ENCODE measurements at regions of chr2 and their contacts with region 1.

Region 1: GRCh38 chr2:105834931-105835330 is 90.2 kb downstream of the NCK2 start:
- DNase-seq: peak; percentile 61
- ATAC-seq: peak; percentile 92
- H3K4me3 ChIP-seq: no peak overlapping the region
- H3K27ac ChIP-seq: no peak overlapping the region
- H3K4me1 ChIP-seq: peaks cover 8% of the 10 kb centered on the region; the same call in 1 of the 2 replicates
- H3K27me3 ChIP-seq: no peaks in the 10 kb centered on the region
- CTCF ChIP-seq: no peak
- EP300 ChIP-seq: peak; percentile 86 to 91
- POLR2A ChIP-seq: no peak
- RAD21 ChIP-seq: no peak

Region 2: GRCh38 chr2:105812180-105813044 is 22.5 kb before region 1 on chr2:
- CTCF ChIA-PET with region 1: no interaction called
- POLR2A ChIA-PET with region 1: interaction called, 3 read pairs
- RAD21 ChIA-PET with region 1: no interaction called
- SMC1A ChIA-PET with region 1: no interaction called
- in situ Hi-C with region 1: no loop called
- intact Hi-C with region 1: loop called (anchors 2 kb)
- DNase-seq: no peak
- ATAC-seq: peak; percentile 97
- H3K4me3 ChIP-seq: no peak overlapping the region
- H3K27ac ChIP-seq: peak overlapping the region; percentile 62
- H3K4me1 ChIP-seq: peaks cover 37% of the 10 kb centered on the region
- H3K27me3 ChIP-seq: no peaks in the 10 kb centered on the region
- CTCF ChIP-seq: no peak
- EP300 ChIP-seq: no peak
- POLR2A ChIP-seq: no peak
- RAD21 ChIP-seq: 0 out of 2 replicates have a peak, but pooled peaks have one; percentile 3

Region 3: GRCh38 chr2:105849431-105850179 is 14.7 kb after region 1 on chr2:
- CTCF ChIA-PET with region 1: no interaction called
- POLR2A ChIA-PET with region 1: no interaction called
- RAD21 ChIA-PET with region 1: no interaction called
- SMC1A ChIA-PET with region 1: no interaction called
- in situ Hi-C with region 1: no loop called
- intact Hi-C with region 1: no loop called
- DNase-seq: no peak
- ATAC-seq: no peak
- H3K4me3 ChIP-seq: no peak overlapping the region
- H3K27ac ChIP-seq: no peak overlapping the region
- H3K4me1 ChIP-seq: no peaks in the 10 kb centered on the region
- H3K27me3 ChIP-seq: no peaks in the 10 kb centered on the region
- CTCF ChIP-seq: no peak
- EP300 ChIP-seq: no peak
- POLR2A ChIP-seq: no peak
- RAD21 ChIP-seq: no peak